ENCODE measurements at regions of chr11 and their contacts with region 1.

Region 1: DNA sequence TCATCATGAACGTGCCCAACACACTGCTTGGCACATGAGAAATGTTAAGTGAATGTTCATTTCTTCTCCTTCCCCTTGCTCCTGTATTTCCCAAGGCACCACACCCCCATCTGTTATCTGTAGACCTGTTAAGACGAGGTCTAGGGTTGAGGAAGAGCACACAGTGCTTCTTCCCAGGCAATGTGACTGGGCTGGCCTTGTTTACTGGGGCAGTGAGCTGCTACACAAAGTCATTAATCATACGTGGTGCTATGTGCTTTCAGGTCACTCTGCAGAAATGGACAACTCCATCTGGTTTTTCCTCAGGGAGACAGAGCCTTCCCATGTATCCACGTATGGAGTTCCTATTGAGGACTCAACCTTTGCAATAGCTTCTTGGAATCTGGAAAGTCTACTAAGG is 118.7 kb downstream of the KCNC1 start:
- DNase-seq: no peak
- H3K4me3 ChIP-seq: no peak overlapping the region
- H3K4me3 Mint-ChIP-seq: no peak overlapping the region
- H3K27ac ChIP-seq: no peak overlapping the region
- H3K27ac Mint-ChIP-seq: no peak overlapping the region
- H3K4me1 ChIP-seq: no peaks in the 10 kb centered on the region
- H3K4me1 Mint-ChIP-seq: peaks cover 16 to 29% (median 20%) of the 10 kb centered on the region in 3 donors
- H3K27me3 ChIP-seq: no peaks in the 10 kb centered on the region
- H3K27me3 Mint-ChIP-seq: no peaks in the 10 kb centered on the region

Region 2: DNA sequence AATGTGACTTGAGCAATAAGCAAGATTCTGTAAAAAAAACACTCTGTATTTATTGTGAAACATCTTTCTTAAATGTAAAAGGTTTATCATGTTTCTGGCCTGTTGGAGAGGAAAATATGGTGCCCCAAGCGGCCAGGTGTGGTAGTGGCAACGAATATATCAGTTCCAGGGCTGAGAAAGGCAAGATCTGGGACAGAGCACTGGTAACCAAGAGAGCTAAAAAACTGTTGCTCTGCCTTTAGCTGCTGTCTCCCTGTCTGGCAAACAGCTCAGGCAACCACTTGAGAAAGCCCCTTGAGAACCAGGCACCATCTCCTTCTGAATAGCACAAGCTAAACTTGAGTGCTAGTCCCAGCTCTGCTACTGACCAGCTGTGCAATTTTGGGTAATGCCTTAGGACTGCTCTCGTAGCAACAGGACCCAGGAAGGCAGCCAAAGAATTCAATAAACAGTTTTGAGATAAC is 11.2 kb after region 1 on chr11:
- CTCF ChIA-PET with region 1: interaction called, 11 read pairs
- POLR2A ChIA-PET with region 1: no interaction called
- DNase-seq: no peak
- H3K4me3 ChIP-seq: no peak overlapping the region
- H3K4me3 Mint-ChIP-seq: no peak overlapping the region
- H3K27ac ChIP-seq: no peak overlapping the region
- H3K27ac Mint-ChIP-seq: no peak overlapping the region
- H3K4me1 ChIP-seq: no peaks in the 10 kb centered on the region
- H3K4me1 Mint-ChIP-seq: peaks cover 0 to 2% (median 0%) of the 10 kb centered on the region in 3 donors
- H3K27me3 ChIP-seq: no peaks in the 10 kb centered on the region
- H3K27me3 Mint-ChIP-seq: no peaks in the 10 kb centered on the region

Region 3: DNA sequence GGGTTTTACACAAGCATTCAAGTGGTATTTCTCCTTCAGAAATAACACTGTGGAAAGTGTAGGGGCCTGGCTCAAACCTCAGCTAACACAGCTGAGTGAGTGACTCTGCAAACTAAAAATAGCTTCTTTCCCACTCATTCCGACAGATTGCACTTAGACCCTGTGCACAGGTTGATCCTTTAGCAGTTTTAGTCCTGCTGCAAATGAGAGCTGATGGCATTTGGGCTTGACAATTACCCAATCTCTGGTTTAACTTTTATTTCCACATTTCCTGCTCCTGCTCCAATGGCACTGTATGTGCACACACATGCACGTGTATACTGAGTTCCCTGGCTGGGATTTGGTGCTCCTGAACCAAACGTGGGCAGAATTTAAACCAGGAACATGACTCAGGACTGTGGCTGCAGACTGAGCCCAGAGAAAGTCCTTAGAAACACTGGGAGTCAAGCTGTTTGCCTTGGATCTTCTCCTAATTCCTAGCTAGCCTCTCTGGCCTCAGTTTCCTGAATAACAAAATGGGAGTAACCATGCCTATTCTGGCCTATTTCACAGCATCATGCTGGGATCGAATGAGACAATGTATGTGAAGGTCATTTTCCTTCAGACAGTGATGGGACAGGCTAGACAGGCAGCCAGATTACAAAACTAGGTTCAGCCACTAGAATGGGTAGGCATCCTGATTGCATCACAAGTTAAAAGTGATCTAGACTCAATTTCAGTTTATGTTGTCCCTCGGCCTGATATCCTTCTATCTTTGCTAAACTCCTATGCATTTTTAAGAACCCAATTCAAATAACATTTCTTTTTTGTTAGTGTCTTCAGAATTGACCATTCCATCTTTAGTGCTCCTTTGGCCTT is 101.3 kb after region 1 on chr11:
- CTCF ChIA-PET with region 1: no interaction called
- POLR2A ChIA-PET with region 1: no interaction called
- DNase-seq: no peak
- H3K4me3 ChIP-seq: no peak overlapping the region
- H3K4me3 Mint-ChIP-seq: no peak overlapping the region
- H3K27ac ChIP-seq: no peak overlapping the region
- H3K27ac Mint-ChIP-seq: no peak overlapping the region
- H3K4me1 ChIP-seq: no peaks in the 10 kb centered on the region
- H3K4me1 Mint-ChIP-seq: no peaks in the 10 kb centered on the region
- H3K27me3 ChIP-seq: no peaks in the 10 kb centered on the region
- H3K27me3 Mint-ChIP-seq: no peaks in the 10 kb centered on the region